IMR-90 (cell line): ENCODE measurements at regions of chr22 and their contacts with region 1.

Region 1: DNA sequence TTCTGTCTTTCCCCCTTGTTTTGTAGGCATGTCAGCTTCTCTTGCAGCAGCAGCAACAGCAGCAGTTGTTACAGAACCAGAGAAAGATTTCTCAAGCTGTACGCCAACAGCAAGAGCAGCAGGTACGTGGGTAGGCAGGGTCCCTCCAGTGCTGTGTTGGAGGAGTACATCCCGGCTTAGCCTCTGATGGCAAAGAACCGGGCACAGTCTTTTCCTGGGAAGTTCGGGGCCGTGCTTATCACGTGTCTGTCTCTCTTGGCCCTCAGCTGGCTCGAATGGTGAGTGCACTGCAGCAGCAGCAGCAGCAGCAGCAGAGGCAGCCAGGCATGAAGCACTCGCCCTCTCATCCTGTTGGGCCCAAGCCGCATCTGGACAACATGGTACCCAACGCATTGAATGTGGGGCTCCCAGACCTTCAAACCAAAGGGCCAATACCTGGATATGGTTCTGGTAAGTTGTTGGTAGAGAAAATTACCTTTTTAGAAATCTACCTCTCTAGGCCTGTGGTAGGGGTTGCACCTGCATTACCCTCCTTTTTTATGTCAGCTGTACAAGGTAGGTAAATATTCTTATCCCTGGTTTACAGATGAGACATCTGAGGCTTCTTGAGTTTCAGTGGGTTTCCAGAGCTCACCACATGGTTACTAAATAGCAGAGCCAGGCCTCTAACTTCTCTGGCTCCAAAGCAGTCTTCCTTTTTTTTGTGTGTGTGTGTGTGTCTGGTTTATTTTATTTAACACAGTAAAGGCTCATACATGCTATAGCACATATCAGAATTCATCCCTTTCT is 45.2 kb upstream of the ADSL start:
- DNase-seq: no peak
- ATAC-seq: no peak
- H3K4me3 ChIP-seq: no peak overlapping the region
- H3K27ac ChIP-seq: no peak overlapping the region
- H3K4me1 ChIP-seq: no peaks in the 10 kb centered on the region
- H3K27me3 ChIP-seq: no peaks in the 10 kb centered on the region
- CTCF ChIP-seq: no peak
- POLR2A ChIP-seq: no peak
- RAD21 ChIP-seq: no peak

Region 2: GRCh38 chr22:38305471-38306448 is 1995.3 kb before region 1 on chr22:
- CTCF ChIA-PET with region 1: no interaction called
- POLR2A ChIA-PET with region 1: interaction called, 11 read pairs
- dilution Hi-C with region 1: no loop called
- in situ Hi-C with region 1: no loop called
- intact Hi-C with region 1: no loop called
- DNase-seq: peak; percentile 54
- ATAC-seq: peak; percentile 19; the same call in 1 of the 2 replicates
- H3K4me3 ChIP-seq: no peak overlapping the region
- H3K27ac ChIP-seq: peak overlapping the region; percentile 51
- H3K4me1 ChIP-seq: peaks cover 33% of the 10 kb centered on the region
- H3K27me3 ChIP-seq: no peaks in the 10 kb centered on the region
- CTCF ChIP-seq: no peak
- POLR2A ChIP-seq: no peak
- RAD21 ChIP-seq: no peak

Region 3: DNA sequence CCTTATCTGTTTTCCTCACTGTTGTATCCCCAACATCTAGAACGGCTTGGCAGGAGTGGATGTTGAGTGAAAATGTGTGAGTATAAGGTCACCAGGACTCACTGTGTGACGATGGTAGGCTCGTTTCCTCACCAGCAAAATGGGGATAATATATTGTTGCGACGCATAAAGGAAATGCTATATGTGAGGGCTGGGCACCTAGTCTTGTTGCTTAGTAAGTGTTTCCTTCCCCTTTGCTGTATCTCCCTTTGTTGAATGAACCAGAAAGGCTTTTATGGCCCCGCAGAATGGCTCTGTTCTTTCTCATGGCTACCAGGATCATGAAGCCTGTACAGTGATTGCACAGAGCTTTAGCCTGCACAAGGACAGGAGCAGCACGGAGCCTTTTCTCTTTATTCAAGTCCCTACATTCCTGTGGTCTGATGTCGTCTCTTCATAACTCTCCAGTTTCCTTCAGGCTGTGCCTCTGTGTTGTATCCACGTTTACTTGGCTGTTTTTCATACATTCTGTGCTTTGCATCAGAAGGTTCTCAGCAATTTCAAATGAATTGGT is 118.0 kb before region 1 on chr22:
- CTCF ChIA-PET with region 1: no interaction called
- POLR2A ChIA-PET with region 1: interaction called, 14 read pairs
- dilution Hi-C with region 1: no loop called
- in situ Hi-C with region 1: no loop called
- intact Hi-C with region 1: no loop called
- DNase-seq: peak; percentile 87
- ATAC-seq: peak; percentile 89
- H3K4me3 ChIP-seq: no peak overlapping the region
- H3K27ac ChIP-seq: no peak overlapping the region; the same call in 1 of the 2 replicates
- H3K4me1 ChIP-seq: peaks cover 8% of the 10 kb centered on the region
- H3K27me3 ChIP-seq: no peaks in the 10 kb centered on the region
- CTCF ChIP-seq: no peak
- POLR2A ChIP-seq: no peak
- RAD21 ChIP-seq: no peak

Region 4: GRCh38 chr22:40368016-40368415 is 66.9 kb after region 1 on chr22:
- CTCF ChIA-PET with region 1: no interaction called
- POLR2A ChIA-PET with region 1: no interaction called
- dilution Hi-C with region 1: no loop called
- in situ Hi-C with region 1: no loop called
- intact Hi-C with region 1: no loop called
- DNase-seq: no peak
- ATAC-seq: no peak
- H3K4me3 ChIP-seq: no peak overlapping the region
- H3K27ac ChIP-seq: no peak overlapping the region
- H3K4me1 ChIP-seq: no peaks in the 10 kb centered on the region
- H3K27me3 ChIP-seq: no peaks in the 10 kb centered on the region
- CTCF ChIP-seq: no peak
- POLR2A ChIP-seq: no peak
- RAD21 ChIP-seq: no peak